Activated CD4-positive, alpha-beta T cell treated with anti-CD3 and anti-CD28 coated beads for 36 hours (primary cell): ENCODE measurements at regions of chr12 and their contacts with region 1.

Region 1: DNA sequence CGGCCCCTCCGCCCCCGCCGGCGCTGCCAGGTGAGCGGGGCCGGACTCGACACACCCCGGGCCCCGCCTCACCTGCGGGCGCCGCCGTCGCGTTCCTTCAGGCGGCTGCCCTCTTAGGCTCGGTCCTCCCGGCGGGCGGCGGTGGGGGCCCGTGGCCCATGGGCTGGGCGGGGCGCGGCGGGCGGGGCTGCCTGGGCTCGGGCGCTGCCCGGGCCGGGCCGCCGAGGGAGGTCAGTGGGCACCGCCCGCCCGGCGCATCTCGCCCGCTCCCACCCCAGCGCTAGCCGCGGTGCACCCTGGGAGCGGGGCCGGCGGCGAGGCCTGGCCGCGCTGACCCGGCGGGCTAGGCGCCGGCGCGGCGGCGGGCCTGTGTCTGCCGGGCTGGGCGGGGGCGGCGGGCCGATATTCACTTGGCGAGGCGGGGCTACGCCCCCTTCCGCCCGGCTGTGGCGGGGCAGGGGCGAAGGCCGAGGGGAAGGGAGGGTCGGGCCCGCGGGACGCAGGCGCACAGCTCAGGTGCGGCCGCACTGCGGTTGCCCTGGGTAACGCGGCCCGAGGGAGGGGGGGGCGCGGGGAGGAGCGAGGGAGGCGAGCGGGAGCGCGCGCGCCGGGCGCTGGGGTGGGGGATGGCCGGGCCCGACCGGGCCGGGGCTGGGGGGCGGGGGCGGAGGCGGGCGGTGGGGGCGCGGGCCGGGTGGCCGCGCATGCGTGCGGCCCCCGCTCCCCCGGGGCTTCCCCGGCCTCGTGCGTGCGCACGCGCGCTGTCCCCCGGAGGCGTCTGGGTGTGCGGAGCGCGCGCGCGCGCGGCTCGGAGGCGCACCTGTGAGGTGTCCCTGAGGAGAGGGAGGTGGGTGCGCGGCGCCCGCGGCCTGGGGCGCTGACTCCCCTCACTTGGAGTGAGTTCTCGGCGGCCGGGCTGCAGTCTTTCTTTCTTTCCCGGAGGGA is at the starts of genes CCDC92 and ZNF664:
- DNase-seq: peak; percentile 98
- ATAC-seq: peak; percentile 87
- H3K4me3 Mint-ChIP-seq: peak within 1 kb of the TSS; percentile 87
- H3K27ac Mint-ChIP-seq: peak within 1 kb of the TSS; percentile 89
- H3K4me1 Mint-ChIP-seq: peaks cover 48% of the 10 kb centered on the region
- H3K27me3 Mint-ChIP-seq: no peaks in the 10 kb centered on the region
- total RNA-seq, gene CCDC92: 8.7 to 11.0 TPM
- total RNA-seq, gene ZNF664: 46.4 to 48.3 TPM

Region 2: GRCh38 chr12:123457980-123458783 is 514.5 kb before region 1 on chr12 and contains the start of gene SNRNP35:
- CTCF ChIA-PET with region 1: no interaction called
- POLR2A ChIA-PET with region 1: no interaction called
- intact Hi-C with region 1: loop called in 1 of 2 experiments (anchors 5 kb)
- DNase-seq: peak; percentile 88
- ATAC-seq: peak; percentile 73
- H3K4me3 Mint-ChIP-seq: peak within 1 kb of the TSS; percentile 98
- H3K27ac Mint-ChIP-seq: peak within 1 kb of the TSS; percentile 100
- H3K4me1 Mint-ChIP-seq: peaks cover 26% of the 10 kb centered on the region
- H3K27me3 Mint-ChIP-seq: no peaks in the 10 kb centered on the region
- total RNA-seq, gene SNRNP35: 24.1 to 24.8 TPM

Region 3: GRCh38 chr12:123670882-123671728 is 301.6 kb before region 1 on chr12 and contains the start of gene TCTN2:
- CTCF ChIA-PET with region 1: no interaction called
- POLR2A ChIA-PET with region 1: no interaction called
- intact Hi-C with region 1: loop called in 1 of 2 experiments (anchors 2 kb)
- DNase-seq: peak; percentile 98
- ATAC-seq: peak; percentile 100
- H3K4me3 Mint-ChIP-seq: peak within 1 kb of the TSS; percentile 78
- H3K27ac Mint-ChIP-seq: peak within 1 kb of the TSS; percentile 25
- H3K4me1 Mint-ChIP-seq: peaks cover 15% of the 10 kb centered on the region
- H3K27me3 Mint-ChIP-seq: no peaks in the 10 kb centered on the region
- total RNA-seq, gene TCTN2: 4.4 to 4.5 TPM

Region 4: GRCh38 chr12:123912415-123913380 is 60.0 kb before region 1 on chr12:
- CTCF ChIA-PET with region 1: interaction called, 4 read pairs
- POLR2A ChIA-PET with region 1: interaction called, 3 read pairs
- intact Hi-C with region 1: loop called in 1 of 2 experiments (anchors 2 kb)
- DNase-seq: no peak
- ATAC-seq: no peak
- H3K4me3 Mint-ChIP-seq: no peak overlapping the region
- H3K27ac Mint-ChIP-seq: no peak overlapping the region
- H3K4me1 Mint-ChIP-seq: peaks cover 17% of the 10 kb centered on the region
- H3K27me3 Mint-ChIP-seq: no peaks in the 10 kb centered on the region

Region 5: DNA sequence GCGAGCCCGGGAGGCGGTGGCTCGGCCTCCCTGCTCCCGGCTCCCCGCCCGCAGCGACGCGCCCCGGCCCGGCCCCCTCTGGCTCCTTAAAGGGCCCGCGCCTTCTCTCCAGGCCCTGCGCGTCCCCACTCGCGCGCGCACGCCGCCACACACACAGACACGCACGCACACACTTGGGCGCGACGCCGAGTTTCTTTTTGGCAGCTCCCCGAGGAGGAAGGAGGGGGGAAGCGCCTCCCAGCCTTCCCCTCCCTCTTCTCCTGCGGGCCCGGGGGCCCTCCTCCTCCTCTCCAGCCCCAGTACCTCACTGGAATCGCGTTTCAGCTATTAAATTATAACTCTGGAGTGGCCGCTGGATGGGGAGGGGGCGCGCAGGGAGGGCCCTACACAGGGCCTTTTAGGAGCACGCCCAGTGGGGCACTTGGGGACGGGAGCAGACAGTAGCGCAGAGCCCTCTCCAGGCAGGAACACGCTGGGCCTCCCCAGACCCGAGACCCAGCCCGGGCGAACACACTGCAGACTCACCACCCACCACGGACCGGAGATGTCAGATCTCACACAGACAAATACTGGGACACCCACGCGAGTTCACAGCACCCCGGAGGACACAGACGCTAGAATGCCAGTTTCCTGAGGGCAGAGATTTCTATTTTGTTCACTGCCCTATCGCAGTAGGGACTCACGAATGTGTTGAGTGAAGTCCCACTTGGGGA is 595.1 kb after region 1 on chr12:
- CTCF ChIA-PET with region 1: no interaction called
- POLR2A ChIA-PET with region 1: no interaction called
- intact Hi-C with region 1: loop called in 1 of 2 experiments (anchors 2 kb)
- DNase-seq: peak; percentile 89
- ATAC-seq: peak; percentile 72
- H3K4me3 Mint-ChIP-seq: peak overlapping the region; percentile 75
- H3K27ac Mint-ChIP-seq: peak overlapping the region; percentile 89
- H3K4me1 Mint-ChIP-seq: peaks cover 33% of the 10 kb centered on the region
- H3K27me3 Mint-ChIP-seq: no peaks in the 10 kb centered on the region